Activated T-helper 2 cell treated with anti-CD3 and anti-CD28 coated beads, Interferon-gamma antibody, Interleukin-2, Interleukin-4, amounts not matched to agents 10 μg/mL and 5 μg/mL and 100 μg/mL, durations not matched to agents 14 hours and 24 hours and 36 hours (primary cell): ENCODE measurements at regions of chr7 and their contacts with region 1.

Region 1: GRCh38 chr7:102272075-102272917 is 14.4 kb upstream of the SH2B2 start:
- DNase-seq: peak; percentile 52
- H3K4me3 Mint-ChIP-seq: no peak overlapping the region
- H3K27ac Mint-ChIP-seq: no peak overlapping the region
- H3K4me1 Mint-ChIP-seq: peaks cover 2% of the 10 kb centered on the region
- H3K27me3 Mint-ChIP-seq: no peaks in the 10 kb centered on the region

Region 2: GRCh38 chr7:101402088-101402779 is 870.1 kb before region 1 on chr7:
- intact Hi-C with region 1: no loop called
- DNase-seq: no peak
- H3K4me3 Mint-ChIP-seq: no peak overlapping the region
- H3K27ac Mint-ChIP-seq: no peak overlapping the region
- H3K4me1 Mint-ChIP-seq: no peaks in the 10 kb centered on the region
- H3K27me3 Mint-ChIP-seq: peaks cover 11% of the 10 kb centered on the region

Region 3: DNA sequence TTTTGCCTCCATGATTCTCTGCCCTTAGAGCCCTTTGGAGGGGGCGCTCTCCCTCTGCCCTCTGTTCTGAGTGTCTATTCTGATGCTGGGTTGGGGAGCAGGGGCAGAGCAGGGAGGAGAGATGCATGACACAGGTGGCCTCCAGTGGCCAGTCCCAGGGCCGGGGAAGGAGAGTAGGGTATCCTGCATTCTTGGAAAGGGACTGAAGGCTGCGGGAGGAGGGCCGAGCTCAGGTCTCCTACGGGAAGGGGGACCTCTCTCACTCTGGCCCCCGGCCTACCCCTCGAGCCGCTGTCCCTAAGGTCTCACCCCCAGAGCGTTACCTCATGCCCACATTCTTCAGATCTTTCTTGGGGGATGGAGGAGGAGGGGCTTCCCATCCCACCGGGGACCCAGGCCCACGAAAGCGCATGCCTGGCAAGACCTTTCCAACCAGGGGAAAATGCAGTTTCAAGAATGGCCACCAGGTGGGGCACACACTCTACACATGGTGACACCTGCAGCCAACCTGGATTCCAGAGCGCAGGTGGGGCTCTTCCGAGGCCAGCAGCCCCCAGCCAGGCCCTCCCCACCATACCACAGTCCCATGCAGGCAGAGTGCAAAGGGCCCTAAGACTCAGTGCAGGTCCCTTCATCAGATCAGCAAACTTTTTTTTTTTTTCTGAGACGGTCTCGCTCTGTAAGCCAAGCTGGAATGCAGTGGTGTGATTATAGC is 729.6 kb before region 1 on chr7:
- intact Hi-C with region 1: loop called (anchors 1 kb)
- DNase-seq: peak; percentile 53
- H3K4me3 Mint-ChIP-seq: no peak overlapping the region
- H3K27ac Mint-ChIP-seq: no peak overlapping the region
- H3K4me1 Mint-ChIP-seq: no peaks in the 10 kb centered on the region
- H3K27me3 Mint-ChIP-seq: no peaks in the 10 kb centered on the region

Region 4: GRCh38 chr7:101602484-101603241 is 669.6 kb before region 1 on chr7:
- intact Hi-C with region 1: loop called (anchors 1 kb)
- DNase-seq: peak; percentile 58
- H3K4me3 Mint-ChIP-seq: no peak overlapping the region
- H3K27ac Mint-ChIP-seq: no peak overlapping the region
- H3K4me1 Mint-ChIP-seq: peaks cover 1% of the 10 kb centered on the region
- H3K27me3 Mint-ChIP-seq: no peaks in the 10 kb centered on the region

Region 5: GRCh38 chr7:101688183-101688831 is 584.0 kb before region 1 on chr7:
- intact Hi-C with region 1: loop called (anchors 1 kb)
- DNase-seq: peak; percentile 71
- H3K4me3 Mint-ChIP-seq: no peak overlapping the region
- H3K27ac Mint-ChIP-seq: no peak overlapping the region
- H3K4me1 Mint-ChIP-seq: peaks cover 5% of the 10 kb centered on the region
- H3K27me3 Mint-ChIP-seq: no peaks in the 10 kb centered on the region